ENCODE measurements at regions of chr7 and their contacts with region 1.

Region 1: DNA sequence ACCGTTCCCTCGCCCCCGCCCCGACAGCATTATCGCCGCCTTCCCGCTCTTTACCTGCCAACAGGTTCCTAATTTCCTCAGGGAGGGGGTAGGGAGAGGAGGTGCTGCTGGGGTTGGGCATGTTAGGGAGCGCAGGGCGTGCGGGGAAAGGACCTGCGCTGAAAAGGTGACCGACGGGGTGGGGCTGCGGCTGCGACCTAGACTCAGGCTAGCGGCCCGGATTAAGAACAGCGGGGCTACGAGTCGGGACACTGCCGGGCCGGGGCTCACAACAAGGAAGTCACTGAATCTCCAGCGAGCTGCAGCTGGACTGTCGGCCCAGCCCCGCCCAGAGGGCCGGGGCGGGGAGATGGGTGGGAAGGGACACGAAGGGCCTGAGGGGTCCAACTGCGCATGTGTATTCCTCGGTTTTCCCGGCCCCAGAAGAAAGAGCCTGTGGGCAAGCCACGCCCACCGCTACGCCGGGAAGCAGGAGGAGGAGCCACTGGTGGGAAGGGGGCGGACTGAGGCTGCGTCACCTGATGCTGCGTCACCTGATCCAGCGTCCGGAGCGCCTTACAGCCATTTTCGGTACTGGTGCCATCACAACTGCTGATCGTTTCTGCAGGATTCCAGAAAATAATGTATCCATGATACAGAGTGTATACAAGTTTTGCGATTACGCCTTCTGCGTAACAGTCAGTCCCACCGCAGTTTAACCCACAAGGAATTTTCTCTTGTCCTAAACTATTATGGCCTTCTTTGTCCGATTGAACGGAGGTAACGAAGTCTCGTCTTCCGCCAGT is at the start of gene SKAP2:
- DNase-seq: peak; percentile 94 to 96
- ATAC-seq: peak; percentile 97 to 98
- H3K4me3 ChIP-seq: peak within 1 kb of the TSS; percentile 67 to 83 (median 72)
- H3K27ac ChIP-seq: peak within 1 kb of the TSS; percentile 79 to 89 (median 87)
- H3K4me1 ChIP-seq: no peaks in the 10 kb centered on the region
- H3K27me3 ChIP-seq: peaks cover 28 to 42% (median 33%) of the 10 kb centered on the region in 3 donors
- CTCF ChIP-seq: no peak
- POLR2A ChIP-seq: peak; percentile 75 to 85
- total RNA-seq, gene SKAP2: 6.1 to 23.5 (median 17.1) TPM

Region 2: GRCh38 chr7:25862260-25863037 is 1002.1 kb before region 1 on chr7:
- in situ Hi-C with region 1: loop called (anchors 10 to 25 kb)
- intact Hi-C with region 1: loop called (anchors 5 kb)
- DNase-seq: peak; percentile 98 to 100
- ATAC-seq: peak; percentile 94 to 95
- H3K4me3 ChIP-seq: peak overlapping the region; percentile 41 to 49 (median 44)
- H3K27ac ChIP-seq: peak overlapping the region; percentile 66 to 78 (median 77)
- H3K4me1 ChIP-seq: peaks cover 11 to 16% of the 10 kb centered on the region in 2 donors
- H3K27me3 ChIP-seq: peaks cover 38 to 48% (median 42%) of the 10 kb centered on the region in 3 donors
- CTCF ChIP-seq: no peak
- POLR2A ChIP-seq: peak in 1 of 2 donors; percentile 15

Region 3: DNA sequence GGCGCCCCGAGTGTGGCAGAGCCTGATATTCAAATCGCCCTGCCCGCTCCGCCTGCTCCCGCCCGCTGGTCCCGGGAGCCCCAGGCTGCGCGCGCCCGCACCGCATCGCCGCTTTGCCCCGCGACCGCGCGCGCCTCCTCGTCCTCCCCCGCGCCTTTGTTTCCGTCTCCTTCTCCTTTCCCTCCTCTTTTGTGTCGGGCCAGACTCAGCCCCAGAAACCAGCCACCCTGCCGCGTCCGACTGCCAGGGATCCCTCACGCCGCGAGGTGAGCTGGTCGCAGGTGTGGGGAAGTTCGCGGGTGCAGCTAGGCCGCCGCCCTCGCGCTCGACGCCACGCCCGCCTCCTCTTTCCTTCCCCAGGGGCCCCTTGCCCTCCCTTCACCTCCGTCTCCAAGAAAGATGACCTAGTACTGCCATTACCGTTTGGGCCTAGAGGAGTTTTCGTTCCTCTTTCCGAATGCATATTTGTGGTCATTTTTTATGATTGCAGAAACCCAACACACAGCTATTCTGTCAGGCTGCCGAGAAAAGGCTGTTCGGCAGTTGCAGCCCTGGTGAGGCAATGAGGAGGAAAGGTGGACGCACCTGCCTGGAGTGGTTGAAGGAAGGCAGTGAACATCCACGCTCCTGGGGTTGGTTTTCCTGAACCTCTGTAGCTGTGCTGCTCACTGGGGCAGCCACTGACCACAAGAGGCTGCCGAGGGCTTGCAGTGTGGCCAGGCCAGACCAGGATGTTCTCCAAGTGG is 465.6 kb before region 1 on chr7:
- in situ Hi-C with region 1: no loop called
- intact Hi-C with region 1: loop called (anchors 10 kb)
- DNase-seq: no peak
- ATAC-seq: peak; percentile 47 to 56
- H3K4me3 ChIP-seq: peak overlapping the region; percentile 64 to 75 (median 68)
- H3K27ac ChIP-seq: peak overlapping the region; percentile 86 to 92 (median 90)
- H3K4me1 ChIP-seq: peaks cover 2 to 7% of the 10 kb centered on the region in 2 donors
- H3K27me3 ChIP-seq: no peaks in the 10 kb centered on the region
- CTCF ChIP-seq: peak in 2 of 5 experiments; percentile 23 to 35
- POLR2A ChIP-seq: no peak

Region 4: DNA sequence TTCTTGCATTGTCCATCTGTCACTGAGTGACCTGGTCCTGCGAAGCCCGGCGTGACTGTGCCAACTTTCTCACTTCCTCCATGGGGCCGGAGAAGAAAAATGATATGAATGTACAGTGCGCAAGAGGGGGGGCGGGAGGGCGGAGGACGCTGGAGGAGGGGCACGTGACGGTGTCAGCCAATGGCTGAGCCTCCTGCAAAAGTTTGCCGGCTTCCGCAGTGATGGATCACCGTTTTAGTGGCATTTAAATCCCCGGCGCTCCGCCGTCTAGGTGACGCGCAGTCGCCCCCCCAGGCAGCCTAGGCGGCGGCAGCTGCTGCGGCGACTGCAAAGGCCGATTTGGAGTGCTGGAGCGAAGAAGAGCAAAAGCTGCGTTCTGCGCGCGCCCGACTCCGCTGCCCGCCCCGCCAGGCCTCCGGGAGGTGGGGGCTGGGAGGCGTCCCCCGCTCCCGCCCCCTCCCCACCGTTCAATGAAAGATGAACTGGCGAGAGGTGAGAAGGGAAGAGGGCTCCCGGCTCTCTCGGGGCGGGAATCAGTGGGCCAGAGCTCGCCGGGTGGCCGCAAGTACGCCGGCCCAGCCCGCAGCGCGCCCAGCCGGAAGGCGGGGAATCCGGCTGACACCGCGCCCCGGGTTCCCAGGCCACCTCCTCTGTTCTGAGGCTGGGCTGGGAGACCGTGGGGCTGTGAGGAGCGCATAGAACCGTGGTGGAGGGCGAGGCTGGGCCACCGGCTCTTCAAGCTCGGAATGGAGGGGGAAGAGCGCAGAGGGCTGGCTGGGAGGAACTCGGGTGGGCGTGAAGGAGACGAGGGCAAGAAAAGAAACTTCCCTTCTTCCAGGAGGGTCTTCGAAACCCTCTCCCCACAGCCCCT is 231.6 kb after region 1 on chr7 and contains the start of gene HOXA1:
- in situ Hi-C with region 1: no loop called
- intact Hi-C with region 1: loop called (anchors 1 kb)
- DNase-seq: peak; percentile 52 to 55
- ATAC-seq: peak; percentile 82 to 83
- H3K4me3 ChIP-seq: peak within 1 kb of the TSS; percentile 78 to 97 (median 88)
- H3K27ac ChIP-seq: peak within 1 kb of the TSS; percentile 73 to 82 (median 80)
- H3K4me1 ChIP-seq: peaks cover 11 to 24% of the 10 kb centered on the region in 2 donors
- H3K27me3 ChIP-seq: no peaks in the 10 kb centered on the region
- CTCF ChIP-seq: peak in 1 of 5 experiments; percentile 13
- POLR2A ChIP-seq: peak; percentile 41 to 59
- total RNA-seq, gene HOXA1: 0.16 to 0.36 TPM in 2 of 4 donors, not detected in the others

Measured in gastrocnemius medialis (tissue), 4 donors.